BJ (cell line): ENCODE measurements at regions of chr14 and their contacts with region 1.

Region 1: GRCh38 chr14:94485944-94486841 is 10.2 kb upstream of the SERPINA9 start:
- DNase-seq: no peak
- H3K4me3 ChIP-seq: no peak overlapping the region
- H3K27me3 ChIP-seq: no peaks in the 10 kb centered on the region; the same call in 1 of the 2 replicates
- CTCF ChIP-seq: peak; percentile 100

Region 2: DNA sequence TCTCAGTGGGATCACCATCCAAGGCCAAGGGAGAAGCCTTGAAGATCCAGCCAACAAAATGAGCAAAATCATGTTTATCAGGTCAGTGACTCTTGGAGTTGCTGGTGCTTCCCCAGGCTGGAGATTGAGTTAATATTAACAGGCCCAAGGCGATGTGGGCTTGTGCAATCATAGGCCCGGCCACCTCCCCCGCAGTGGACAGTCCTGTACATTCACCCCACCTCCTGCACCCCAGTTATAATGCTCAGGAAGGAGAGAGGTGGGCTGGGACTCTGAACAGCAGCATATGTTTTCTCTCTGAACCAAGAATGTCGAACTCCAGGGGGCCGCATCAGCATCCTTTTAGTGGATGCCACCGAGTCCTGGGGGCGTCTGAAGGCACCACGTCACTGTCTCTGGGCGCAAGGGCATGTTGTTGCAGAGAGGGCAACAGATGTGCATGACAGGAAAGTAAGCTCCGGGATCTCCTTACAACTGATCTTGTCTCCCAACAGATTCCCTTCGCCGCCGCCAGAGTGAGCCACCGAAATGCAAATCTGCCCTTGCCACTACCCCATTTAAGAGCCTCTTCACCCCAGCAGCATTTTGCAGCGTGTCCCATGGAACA is 130.9 kb before region 1 on chr14:
- CTCF ChIA-PET with region 1: interaction called, 14 read pairs
- POLR2A ChIA-PET with region 1: no interaction called
- DNase-seq: no peak
- H3K4me3 ChIP-seq: no peak overlapping the region
- H3K27me3 ChIP-seq: no peaks in the 10 kb centered on the region
- CTCF ChIP-seq: peak; percentile 64

Region 3: DNA sequence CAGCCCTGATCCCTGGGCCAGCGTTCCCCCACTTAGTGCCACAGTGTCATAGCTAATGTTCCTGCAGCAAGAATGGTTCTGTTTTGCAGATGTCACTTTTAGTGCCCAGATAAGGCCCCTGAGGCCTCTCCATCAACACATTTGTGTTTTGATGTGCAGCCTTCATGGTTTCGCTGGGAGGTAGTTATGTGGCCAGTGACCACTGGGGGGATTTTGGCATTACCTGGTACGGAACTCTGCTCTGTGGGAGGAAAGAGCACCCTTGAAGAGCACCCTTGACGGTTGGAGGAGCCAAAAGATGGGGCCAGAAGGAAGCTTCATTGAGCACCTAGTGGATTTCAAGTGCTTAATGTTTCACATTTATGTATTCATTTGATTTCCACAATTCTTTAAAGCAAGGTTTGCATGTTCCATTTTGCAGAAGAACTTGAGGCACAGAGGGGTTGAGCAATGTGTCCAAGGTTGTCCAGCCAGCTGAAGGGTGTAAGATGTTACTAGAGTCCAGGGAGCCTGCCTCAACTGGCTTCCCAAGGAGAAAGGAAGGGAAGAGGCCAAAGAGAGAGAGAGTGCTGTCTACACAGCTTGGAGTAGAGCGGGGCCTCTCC is 46.6 kb before region 1 on chr14:
- CTCF ChIA-PET with region 1: interaction called, 27 read pairs
- POLR2A ChIA-PET with region 1: no interaction called
- DNase-seq: no peak
- H3K4me3 ChIP-seq: no peak overlapping the region
- H3K27me3 ChIP-seq: no peaks in the 10 kb centered on the region
- CTCF ChIP-seq: no peak

Region 4: GRCh38 chr14:94474581-94475031 is 11.6 kb before region 1 on chr14:
- CTCF ChIA-PET with region 1: interaction called, 16 read pairs
- POLR2A ChIA-PET with region 1: no interaction called
- DNase-seq: no peak
- H3K4me3 ChIP-seq: no peak overlapping the region
- H3K27me3 ChIP-seq: no peaks in the 10 kb centered on the region
- CTCF ChIP-seq: no peak

Region 5: GRCh38 chr14:94548999-94549985 is 63.1 kb after region 1 on chr14:
- CTCF ChIA-PET with region 1: interaction called, 11 read pairs
- POLR2A ChIA-PET with region 1: no interaction called
- DNase-seq: no peak
- H3K4me3 ChIP-seq: no peak overlapping the region
- H3K27me3 ChIP-seq: no peaks in the 10 kb centered on the region
- CTCF ChIP-seq: peak; percentile 88